OCI-LY7 (cell line): ENCODE measurements at regions of chr5 and their contacts with region 1.

Region 1: GRCh38 chr5:4868109-4868735 is 271.9 kb upstream of the ADAMTS16 start:
- DNase-seq: peak; percentile 47
- H3K4me3 ChIP-seq: no peak overlapping the region
- H3K27ac ChIP-seq: no peak overlapping the region
- H3K4me1 ChIP-seq: no peaks in the 10 kb centered on the region
- CTCF ChIP-seq: peak; percentile 94

Region 2: GRCh38 chr5:4941957-4942830 is 74.0 kb after region 1 on chr5:
- CTCF ChIA-PET with region 1: no interaction called
- POLR2A ChIA-PET with region 1: no interaction called
- intact Hi-C with region 1: loop called (anchors 5 kb)
- DNase-seq: no peak
- H3K4me3 ChIP-seq: no peak overlapping the region
- H3K27ac ChIP-seq: no peak overlapping the region
- H3K4me1 ChIP-seq: no peaks in the 10 kb centered on the region
- CTCF ChIP-seq: peak; percentile 94

Region 3: DNA sequence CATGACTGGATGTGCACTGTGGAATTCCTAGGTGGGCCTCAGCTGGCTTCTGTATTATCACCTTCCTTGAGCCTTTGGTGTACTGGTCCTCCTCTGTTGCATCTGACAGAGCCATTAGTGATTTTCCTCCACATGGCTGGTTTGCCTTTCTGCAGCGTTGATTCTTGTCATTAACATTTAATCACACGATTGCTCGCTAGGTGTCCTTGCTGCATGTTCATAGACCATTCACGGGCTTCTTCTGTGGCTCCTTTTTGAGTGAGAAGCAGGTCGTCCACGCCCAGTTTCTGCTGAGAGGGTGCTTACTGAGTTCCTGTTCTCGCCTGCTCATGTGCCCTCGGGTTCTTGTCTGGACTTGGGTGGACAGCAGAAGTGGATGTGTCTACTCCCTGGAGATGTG is 301.2 kb after region 1 on chr5:
- CTCF ChIA-PET with region 1: no interaction called
- POLR2A ChIA-PET with region 1: no interaction called
- intact Hi-C with region 1: no loop called
- DNase-seq: no peak
- H3K4me3 ChIP-seq: no peak overlapping the region
- H3K27ac ChIP-seq: no peak overlapping the region
- H3K4me1 ChIP-seq: no peaks in the 10 kb centered on the region
- CTCF ChIP-seq: no peak